Calu3 (cell line): ENCODE measurements at regions of chrX and their contacts with region 1.

Region 1: GRCh38 chrX:34918856-34919255 is 23.7 kb upstream of the FAM47B start:
- DNase-seq: peak; percentile 54
- H3K4me3 Mint-ChIP-seq: no peak overlapping the region
- H3K27ac Mint-ChIP-seq: peak overlapping the region; percentile 42
- H3K4me1 Mint-ChIP-seq: peaks cover 31% of the 10 kb centered on the region
- H3K27me3 Mint-ChIP-seq: no peaks in the 10 kb centered on the region
- CTCF ChIP-seq: peak; percentile 56

Region 2: DNA sequence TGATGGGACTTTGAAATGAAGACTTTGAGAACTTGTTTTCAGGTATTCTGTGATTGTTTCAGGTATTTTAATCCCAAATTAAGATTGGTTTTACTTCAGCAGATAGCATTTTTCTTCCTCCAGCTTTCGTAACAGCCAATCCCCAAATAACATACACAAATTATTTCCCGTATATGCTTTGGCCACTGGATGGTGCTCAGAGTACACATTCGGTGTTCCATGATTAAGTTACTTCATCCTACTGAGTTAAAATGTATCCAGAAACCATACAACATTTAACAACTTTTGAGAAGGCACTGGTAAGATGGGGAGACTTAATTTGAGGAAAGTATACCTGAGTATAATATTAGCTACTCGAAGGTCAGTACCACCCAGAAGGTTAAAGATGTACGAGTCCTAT is 553.4 kb before region 1 on chrX:
- CTCF ChIA-PET with region 1: interaction called, 3 read pairs
- intact Hi-C with region 1: loop called (anchors 5 kb)
- DNase-seq: peak; percentile 29
- H3K4me3 Mint-ChIP-seq: no peak overlapping the region
- H3K27ac Mint-ChIP-seq: no peak overlapping the region
- H3K4me1 Mint-ChIP-seq: peaks cover 8% of the 10 kb centered on the region
- H3K27me3 Mint-ChIP-seq: no peaks in the 10 kb centered on the region
- CTCF ChIP-seq: peak; percentile 20

Region 3: DNA sequence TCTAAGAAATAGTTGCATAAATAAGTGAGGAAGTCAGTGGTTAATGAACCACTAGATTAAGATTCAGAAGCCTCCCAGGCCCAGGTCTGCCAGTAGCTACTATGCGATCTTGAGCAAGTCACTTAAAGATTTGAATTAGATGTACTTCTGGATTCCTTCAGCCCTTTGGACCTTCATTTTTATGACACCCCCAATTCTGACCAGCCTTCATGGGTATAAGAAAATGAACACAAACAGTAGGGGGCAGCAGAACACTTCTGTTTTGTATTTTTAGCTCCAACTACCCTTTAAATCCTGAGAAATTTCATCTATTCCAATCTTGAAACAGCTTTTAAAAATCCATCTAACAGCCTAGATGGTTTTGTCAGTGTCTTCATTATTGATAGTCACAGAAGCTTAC is 280.7 kb before region 1 on chrX:
- CTCF ChIA-PET with region 1: interaction called, 4 read pairs
- intact Hi-C with region 1: loop called (anchors 10 kb)
- DNase-seq: no peak
- H3K4me3 Mint-ChIP-seq: no peak overlapping the region
- H3K27ac Mint-ChIP-seq: no peak overlapping the region
- H3K4me1 Mint-ChIP-seq: peaks cover 27% of the 10 kb centered on the region
- H3K27me3 Mint-ChIP-seq: no peaks in the 10 kb centered on the region
- CTCF ChIP-seq: peak; percentile 38

Region 4: GRCh38 chrX:35380808-35381700 is 462.2 kb after region 1 on chrX:
- CTCF ChIA-PET with region 1: no interaction called
- intact Hi-C with region 1: loop called (anchors 5 kb)
- DNase-seq: no peak
- H3K4me3 Mint-ChIP-seq: no peak overlapping the region
- H3K27ac Mint-ChIP-seq: peak overlapping the region; percentile 22
- H3K4me1 Mint-ChIP-seq: peaks cover 23% of the 10 kb centered on the region
- H3K27me3 Mint-ChIP-seq: no peaks in the 10 kb centered on the region
- CTCF ChIP-seq: peak; percentile 52

Region 5: GRCh38 chrX:36562986-36563385 is 1644.1 kb after region 1 on chrX:
- CTCF ChIA-PET with region 1: no interaction called
- intact Hi-C with region 1: loop called (anchors 10 kb)
- DNase-seq: no peak
- H3K4me3 Mint-ChIP-seq: no peak overlapping the region
- H3K27ac Mint-ChIP-seq: no peak overlapping the region
- H3K4me1 Mint-ChIP-seq: no peaks in the 10 kb centered on the region
- H3K27me3 Mint-ChIP-seq: no peaks in the 10 kb centered on the region
- CTCF ChIP-seq: no peak